Activated CD4-positive, alpha-beta memory T cell treated with anti-CD3 and anti-CD28 coated beads for 36 hours (primary cell): ENCODE measurements at regions of chr4 and their contacts with region 1.

Region 1: DNA sequence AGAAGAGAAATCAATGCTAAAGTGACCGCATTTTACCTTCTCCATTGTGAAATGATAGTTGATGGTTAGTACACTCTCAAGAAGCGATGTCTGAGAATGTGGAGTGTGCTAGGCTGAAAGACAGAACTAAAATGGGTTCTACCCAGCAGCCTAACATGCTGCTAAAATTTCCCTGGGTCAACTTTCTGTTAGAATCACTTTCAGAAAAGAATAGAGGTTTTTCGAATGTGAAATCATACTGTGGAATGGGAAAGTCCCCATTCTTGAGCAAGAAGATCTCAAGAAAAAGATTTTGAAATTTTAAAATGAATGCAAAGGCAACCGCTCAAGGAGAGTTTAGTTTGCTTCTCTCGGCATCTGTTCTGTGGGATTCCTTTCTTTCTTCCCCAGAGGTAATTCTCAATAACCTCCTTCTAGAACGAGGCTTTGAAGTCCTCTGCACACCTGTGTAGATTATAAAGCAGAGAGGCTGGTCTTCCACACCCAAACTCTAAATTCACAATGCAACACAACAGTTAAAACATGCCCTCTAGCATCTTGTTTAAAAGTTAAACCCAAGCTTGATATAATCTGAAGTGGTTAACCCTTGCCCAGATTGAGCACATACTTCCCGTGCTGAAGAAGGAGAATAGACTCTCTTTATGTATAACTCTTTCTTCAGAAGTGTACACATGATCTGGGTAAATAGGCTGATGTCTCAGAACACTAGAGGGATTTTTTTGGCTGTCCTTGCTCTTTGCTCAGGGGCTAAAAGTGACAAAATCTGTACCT is 208.7 kb upstream of the KLF3 start:
- DNase-seq: no peak
- H3K4me3 Mint-ChIP-seq: no peak overlapping the region
- H3K27ac Mint-ChIP-seq: peak overlapping the region; percentile 79
- H3K4me1 Mint-ChIP-seq: peaks cover 49% of the 10 kb centered on the region
- H3K27me3 Mint-ChIP-seq: peaks cover 15% of the 10 kb centered on the region

Region 2: DNA sequence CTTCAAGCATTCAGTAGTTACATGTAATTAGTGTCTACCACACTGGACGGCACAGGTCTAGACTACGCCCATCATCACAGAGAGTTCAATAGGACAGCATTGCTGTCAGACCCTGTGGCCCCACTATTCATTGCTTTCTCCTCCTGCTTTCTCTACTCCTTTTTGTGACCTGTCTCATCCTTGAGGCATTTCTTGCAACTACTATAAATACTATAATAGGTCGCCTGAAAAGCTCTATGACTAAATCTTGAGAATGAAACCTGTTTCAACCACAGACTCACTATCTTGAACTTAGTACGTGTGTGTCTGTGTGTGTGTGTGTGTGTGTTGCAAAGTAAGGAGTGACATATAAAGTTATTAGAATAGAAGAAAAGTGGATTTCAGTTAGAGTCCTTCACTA is 44.2 kb before region 1 on chr4:
- CTCF ChIA-PET with region 1: no interaction called
- POLR2A ChIA-PET with region 1: no interaction called
- intact Hi-C with region 1: loop called (anchors 2 kb)
- DNase-seq: no peak
- H3K4me3 Mint-ChIP-seq: no peak overlapping the region
- H3K27ac Mint-ChIP-seq: no peak overlapping the region
- H3K4me1 Mint-ChIP-seq: peaks cover 9% of the 10 kb centered on the region
- H3K27me3 Mint-ChIP-seq: peaks cover 6% of the 10 kb centered on the region

Region 3: GRCh38 chr4:38509551-38509950 is 54.3 kb after region 1 on chr4:
- CTCF ChIA-PET with region 1: no interaction called
- POLR2A ChIA-PET with region 1: no interaction called
- intact Hi-C with region 1: loop called (anchors 2 kb)
- DNase-seq: peak; percentile 50
- H3K4me3 Mint-ChIP-seq: peak overlapping the region; percentile 24
- H3K27ac Mint-ChIP-seq: no peak overlapping the region
- H3K4me1 Mint-ChIP-seq: peaks cover 81% of the 10 kb centered on the region
- H3K27me3 Mint-ChIP-seq: no peaks in the 10 kb centered on the region

Region 4: GRCh38 chr4:39754309-39754708 is 1299.0 kb after region 1 on chr4:
- CTCF ChIA-PET with region 1: no interaction called
- POLR2A ChIA-PET with region 1: no interaction called
- intact Hi-C with region 1: no loop called
- DNase-seq: no peak
- H3K4me3 Mint-ChIP-seq: no peak overlapping the region
- H3K27ac Mint-ChIP-seq: peak overlapping the region; percentile 39
- H3K4me1 Mint-ChIP-seq: peaks cover 8% of the 10 kb centered on the region
- H3K27me3 Mint-ChIP-seq: no peaks in the 10 kb centered on the region